ENCODE measurements at regions of chr17 and their contacts with region 1.

Region 1: GRCh38 chr17:76585818-76586593 is at the start of gene ST6GALNAC2:
- DNase-seq: peak; percentile 69 to 73 (median 72)
- H3K4me3 ChIP-seq: peak within 1 kb of the TSS; percentile 52 to 85 (median 79)
- H3K4me3 Mint-ChIP-seq: peak within 1 kb of the TSS; percentile 89 to 90
- H3K27ac ChIP-seq: peak within 1 kb of the TSS; percentile 53 to 78
- H3K27ac Mint-ChIP-seq: peak within 1 kb of the TSS; percentile 76 to 91 (median 83)
- H3K4me1 ChIP-seq: peaks cover 22 to 23% of the 10 kb centered on the region in 2 donors
- H3K4me1 Mint-ChIP-seq: peaks cover 34% of the 10 kb centered on the region
- H3K27me3 ChIP-seq: peaks cover 9 to 34% of the 10 kb centered on the region in 2 donors
- H3K27me3 Mint-ChIP-seq: peaks cover 47 to 69% (median 48%) of the 10 kb centered on the region in 3 donors
- CTCF ChIP-seq: peak; percentile 57
- polyA plus RNA-seq, gene ST6GALNAC2: 8.3 to 11.8 (median 11.8) TPM

Region 2: GRCh38 chr17:76467366-76467765 is 118.6 kb before region 1 on chr17 and contains the start of gene AANAT:
- intact Hi-C with region 1: loop called in 1 of 2 experiments (anchors 10 kb)
- DNase-seq: no peak
- H3K4me3 ChIP-seq: no peak within 1 kb of the TSS
- H3K4me3 Mint-ChIP-seq: no peak within 1 kb of the TSS
- H3K27ac ChIP-seq: no peak within 1 kb of the TSS
- H3K27ac Mint-ChIP-seq: peak within 1 kb of the TSS in 4 of 7 donors; percentile 40 to 61 (median 48)
- H3K4me1 ChIP-seq: peaks cover 8 to 9% of the 10 kb centered on the region in 2 donors
- H3K4me1 Mint-ChIP-seq: peaks cover 16% of the 10 kb centered on the region
- H3K27me3 ChIP-seq: no peaks in the 10 kb centered on the region
- H3K27me3 Mint-ChIP-seq: peaks cover 0 to 4% (median 2%) of the 10 kb centered on the region in 3 donors
- CTCF ChIP-seq: no peak
- polyA plus RNA-seq, gene AANAT: not detected

Region 3: GRCh38 chr17:76523084-76524037 is 62.6 kb before region 1 on chr17:
- intact Hi-C with region 1: loop called in 1 of 2 experiments (anchors 2 kb)
- DNase-seq: peak; percentile 66 to 79 (median 67)
- H3K4me3 ChIP-seq: no peak overlapping the region
- H3K4me3 Mint-ChIP-seq: peak overlapping the region in 1 of 2 donors; percentile 71
- H3K27ac ChIP-seq: no peak overlapping the region
- H3K27ac Mint-ChIP-seq: peak overlapping the region in 2 of 7 donors; percentile 8 to 61
- H3K4me1 ChIP-seq: peaks cover 4 to 13% of the 10 kb centered on the region in 2 donors
- H3K4me1 Mint-ChIP-seq: peaks cover 11% of the 10 kb centered on the region
- H3K27me3 ChIP-seq: peaks cover 0 to 19% of the 10 kb centered on the region in 2 donors
- H3K27me3 Mint-ChIP-seq: peaks cover 21 to 38% (median 33%) of the 10 kb centered on the region in 3 donors
- CTCF ChIP-seq: peak; percentile 100

Region 4: DNA sequence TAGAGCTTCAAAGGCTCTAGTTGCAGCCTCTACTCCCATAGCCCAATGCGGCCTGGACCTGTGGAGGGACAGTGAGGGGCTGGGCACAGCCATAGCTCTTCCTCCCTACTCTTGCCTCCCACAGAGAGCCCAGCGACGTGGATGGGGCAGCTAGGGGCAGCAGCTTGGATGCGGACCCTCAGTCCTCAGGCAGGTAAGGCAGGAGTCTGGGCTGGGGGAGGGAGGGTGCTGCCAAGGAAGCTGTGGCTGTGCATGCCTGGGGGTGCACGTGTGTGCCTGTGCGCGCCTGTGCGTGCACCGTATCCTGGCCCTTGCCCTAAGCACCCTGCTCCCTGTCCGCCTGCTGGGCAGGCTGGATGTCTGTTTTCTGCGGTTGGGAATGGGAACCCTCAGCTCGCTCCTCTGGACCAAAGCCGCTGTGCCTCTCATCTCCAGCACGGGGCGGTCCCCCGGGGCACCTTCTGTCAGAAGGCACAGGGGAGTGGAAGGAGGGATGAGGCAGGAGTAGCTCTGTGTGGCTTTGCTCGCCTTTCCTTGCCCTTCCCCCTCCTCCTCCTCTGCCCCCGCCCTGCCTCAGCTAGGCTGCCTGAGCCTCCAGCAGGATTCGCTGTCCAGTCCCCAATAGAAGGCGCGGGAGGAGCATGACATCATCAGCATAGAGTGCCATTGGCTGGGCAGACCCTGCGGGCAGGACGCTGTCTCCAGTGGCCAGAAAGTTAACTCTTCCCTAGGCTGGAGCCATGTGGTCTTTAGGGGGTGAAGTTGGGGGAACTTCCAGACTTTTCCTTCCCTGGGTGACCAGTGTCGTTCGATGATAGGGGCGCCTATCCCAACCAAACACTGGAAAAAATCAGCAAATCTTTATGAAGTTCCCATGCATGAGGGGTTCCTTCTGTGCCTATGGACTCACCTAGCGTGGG is 45.4 kb before region 1 on chr17:
- intact Hi-C with region 1: no loop called
- DNase-seq: peak; percentile 78 to 88 (median 83)
- H3K4me3 ChIP-seq: peak overlapping the region in 2 of 3 experiments; percentile 28 to 62
- H3K4me3 Mint-ChIP-seq: peak overlapping the region; percentile 67 to 87
- H3K27ac ChIP-seq: no peak overlapping the region
- H3K27ac Mint-ChIP-seq: no peak overlapping the region
- H3K4me1 ChIP-seq: peaks cover 13 to 20% of the 10 kb centered on the region in 2 donors
- H3K4me1 Mint-ChIP-seq: peaks cover 14% of the 10 kb centered on the region
- H3K27me3 ChIP-seq: peaks cover 23 to 61% of the 10 kb centered on the region in 2 donors
- H3K27me3 Mint-ChIP-seq: peaks cover 63 to 88% (median 71%) of the 10 kb centered on the region in 3 donors
- CTCF ChIP-seq: no peak

Region 5: GRCh38 chr17:76550712-76551615 is 35.0 kb before region 1 on chr17:
- intact Hi-C with region 1: loop called in 1 of 2 experiments (anchors 5 kb)
- DNase-seq: peak; percentile 59 to 82 (median 63)
- H3K4me3 ChIP-seq: peak overlapping the region in 2 of 3 experiments; percentile 42 to 58
- H3K4me3 Mint-ChIP-seq: peak overlapping the region; percentile 72 to 95
- H3K27ac ChIP-seq: peak overlapping the region; percentile 36 to 82
- H3K27ac Mint-ChIP-seq: peak overlapping the region; percentile 82 to 91 (median 89)
- H3K4me1 ChIP-seq: peaks cover 18 to 23% of the 10 kb centered on the region in 2 donors
- H3K4me1 Mint-ChIP-seq: peaks cover 23% of the 10 kb centered on the region
- H3K27me3 ChIP-seq: no peaks in the 10 kb centered on the region
- H3K27me3 Mint-ChIP-seq: peaks cover 0 to 3% (median 0%) of the 10 kb centered on the region in 3 donors
- CTCF ChIP-seq: no peak

Region 6: DNA sequence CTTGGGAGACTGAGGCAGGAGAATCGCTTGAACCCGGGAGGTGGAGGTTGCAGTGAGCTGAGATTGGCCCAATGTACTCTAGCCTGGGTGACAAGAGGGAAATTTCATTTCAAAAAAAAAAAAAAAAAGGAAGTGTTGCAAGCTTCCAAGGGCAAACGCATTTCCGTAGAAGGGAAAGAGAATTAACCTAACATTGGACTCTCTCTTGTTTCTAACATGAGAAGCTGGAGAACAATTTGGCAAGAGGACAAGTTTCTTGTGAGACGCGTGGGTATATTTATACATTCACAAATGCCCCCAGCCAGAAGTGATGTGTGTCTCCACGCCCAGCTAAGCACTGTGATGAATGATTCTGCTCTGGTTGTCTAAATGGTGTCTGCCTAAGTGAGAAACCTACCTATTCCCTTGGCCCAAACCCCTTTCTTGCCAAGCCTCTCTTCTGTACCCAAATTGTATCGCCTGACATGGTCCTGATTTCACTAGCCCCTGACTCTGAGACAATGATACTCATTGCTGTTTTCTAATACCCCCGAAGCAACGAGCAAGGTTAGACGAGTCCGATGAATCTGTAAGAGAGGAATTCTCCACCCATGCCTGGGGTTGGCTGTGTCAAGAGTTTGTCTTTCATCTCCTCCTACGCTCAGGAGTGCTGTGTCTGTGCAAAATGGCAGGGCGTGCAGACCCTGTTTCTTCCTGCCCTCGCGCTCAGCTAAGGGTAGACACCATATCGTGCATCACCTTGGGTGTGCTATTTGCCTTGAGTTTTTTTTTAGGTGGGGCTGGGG is 13.9 kb after region 1 on chr17:
- intact Hi-C with region 1: loop called in 1 of 2 experiments (anchors 2 kb)
- DNase-seq: peak; percentile 78 to 90 (median 87)
- H3K4me3 ChIP-seq: peak overlapping the region in 1 of 3 experiments; percentile 55
- H3K4me3 Mint-ChIP-seq: peak overlapping the region; percentile 48 to 72
- H3K27ac ChIP-seq: peak overlapping the region; percentile 84 to 86
- H3K27ac Mint-ChIP-seq: peak overlapping the region; percentile 89 to 98 (median 96)
- H3K4me1 ChIP-seq: peaks cover 59 to 65% of the 10 kb centered on the region in 2 donors
- H3K4me1 Mint-ChIP-seq: peaks cover 62% of the 10 kb centered on the region
- H3K27me3 ChIP-seq: no peaks in the 10 kb centered on the region
- H3K27me3 Mint-ChIP-seq: peaks cover 0 to 1% (median 0%) of the 10 kb centered on the region in 3 donors
- CTCF ChIP-seq: no peak

Region 7: GRCh38 chr17:76623271-76624146 is 37.5 kb after region 1 on chr17:
- intact Hi-C with region 1: loop called (anchors 5 kb)
- DNase-seq: peak; percentile 64 to 75 (median 67)
- H3K4me3 ChIP-seq: no peak overlapping the region
- H3K4me3 Mint-ChIP-seq: no peak overlapping the region
- H3K27ac ChIP-seq: no peak overlapping the region
- H3K27ac Mint-ChIP-seq: peak overlapping the region in 1 of 7 donors; percentile 48
- H3K4me1 ChIP-seq: no peaks in the 10 kb centered on the region
- H3K4me1 Mint-ChIP-seq: peaks cover 8% of the 10 kb centered on the region
- H3K27me3 ChIP-seq: no peaks in the 10 kb centered on the region
- H3K27me3 Mint-ChIP-seq: peaks cover 1 to 9% (median 7%) of the 10 kb centered on the region in 3 donors
- CTCF ChIP-seq: peak; percentile 96

Region 8: DNA sequence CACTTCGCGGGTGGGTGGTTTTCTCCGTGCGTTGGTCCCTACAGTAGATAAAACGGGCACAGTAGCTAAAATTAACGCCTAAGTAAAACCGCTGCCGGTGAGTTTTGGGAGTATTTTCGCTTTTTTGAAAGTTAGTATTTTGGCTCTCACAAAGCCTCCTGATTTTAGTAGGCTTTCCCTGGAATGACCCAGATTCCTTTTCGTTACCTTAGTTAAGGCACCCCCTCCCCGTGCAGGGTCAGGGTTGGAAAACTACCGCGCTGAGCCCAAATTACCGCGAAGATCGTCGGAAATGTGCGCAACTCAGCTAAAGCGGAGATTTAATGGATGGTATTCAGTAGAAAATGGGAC is 85.9 kb after region 1 on chr17:
- intact Hi-C with region 1: no loop called
- DNase-seq: no peak
- H3K4me3 ChIP-seq: peak overlapping the region; percentile 66 to 90 (median 87)
- H3K4me3 Mint-ChIP-seq: peak overlapping the region; percentile 81 to 94
- H3K27ac ChIP-seq: peak overlapping the region; percentile 64 to 86
- H3K27ac Mint-ChIP-seq: peak overlapping the region; percentile 53 to 94 (median 87)
- H3K4me1 ChIP-seq: peaks cover 12 to 15% of the 10 kb centered on the region in 2 donors
- H3K4me1 Mint-ChIP-seq: peaks cover 18% of the 10 kb centered on the region
- H3K27me3 ChIP-seq: no peaks in the 10 kb centered on the region
- H3K27me3 Mint-ChIP-seq: peaks cover 4 to 7% (median 6%) of the 10 kb centered on the region in 3 donors
- CTCF ChIP-seq: no peak